Activated CD8-positive, alpha-beta T cell treated with anti-CD3 and anti-CD28 coated beads for 36 hours (primary cell): ENCODE measurements at regions of chr4 and their contacts with region 1.

Region 1: GRCh38 chr4:184263910-184264732 is 46.4 kb upstream of the ENPP6 start:
- DNase-seq: peak; percentile 100
- ATAC-seq: peak; percentile 47
- H3K4me3 Mint-ChIP-seq: peak overlapping the region; percentile 3
- H3K27ac Mint-ChIP-seq: peak overlapping the region; percentile 61
- H3K4me1 Mint-ChIP-seq: peaks cover 51% of the 10 kb centered on the region
- H3K27me3 Mint-ChIP-seq: no peaks in the 10 kb centered on the region
- CTCF ChIP-seq: peak; percentile 90

Region 2: DNA sequence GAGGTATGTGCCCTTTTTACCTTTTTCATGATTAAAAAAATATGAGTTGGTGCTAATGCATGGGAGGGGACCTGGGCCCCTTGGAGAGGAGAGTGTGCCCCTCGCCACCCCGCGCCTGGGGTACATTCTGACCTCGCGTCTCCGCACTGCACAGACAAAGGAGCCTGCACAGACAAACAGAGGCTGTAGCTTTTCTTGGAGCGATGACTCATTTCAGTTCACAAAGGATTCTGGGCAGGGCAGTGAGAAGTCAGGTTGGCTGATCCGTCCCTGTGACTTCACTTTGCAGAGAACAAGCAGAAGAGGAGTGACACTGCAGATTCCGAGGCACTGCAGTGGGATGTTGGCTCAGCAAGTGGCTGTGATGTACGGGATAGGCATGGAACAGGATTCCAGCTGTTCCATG is 276.1 kb before region 1 on chr4:
- CTCF ChIA-PET with region 1: no interaction called
- POLR2A ChIA-PET with region 1: no interaction called
- intact Hi-C with region 1: no loop called
- DNase-seq: no peak
- ATAC-seq: no peak
- H3K4me3 Mint-ChIP-seq: no peak overlapping the region
- H3K27ac Mint-ChIP-seq: no peak overlapping the region
- H3K4me1 Mint-ChIP-seq: no peaks in the 10 kb centered on the region
- H3K27me3 Mint-ChIP-seq: peaks cover 2% of the 10 kb centered on the region
- CTCF ChIP-seq: no peak

Region 3: GRCh38 chr4:184282251-184282713 is 18.2 kb after region 1 on chr4:
- CTCF ChIA-PET with region 1: interaction called, 89 read pairs
- POLR2A ChIA-PET with region 1: interaction called, 48 read pairs
- intact Hi-C with region 1: no loop called
- DNase-seq: peak; percentile 90
- ATAC-seq: peak; percentile 84
- H3K4me3 Mint-ChIP-seq: peak overlapping the region; percentile 52
- H3K27ac Mint-ChIP-seq: peak overlapping the region; percentile 96
- H3K4me1 Mint-ChIP-seq: peaks cover 69% of the 10 kb centered on the region
- H3K27me3 Mint-ChIP-seq: no peaks in the 10 kb centered on the region
- CTCF ChIP-seq: peak; percentile 58

Region 4: GRCh38 chr4:184329659-184330400 is 65.7 kb after region 1 on chr4:
- CTCF ChIA-PET with region 1: interaction called, 33 read pairs
- POLR2A ChIA-PET with region 1: interaction called, 4 read pairs
- intact Hi-C with region 1: no loop called
- DNase-seq: peak; percentile 71
- ATAC-seq: peak; percentile 54
- H3K4me3 Mint-ChIP-seq: no peak overlapping the region
- H3K27ac Mint-ChIP-seq: no peak overlapping the region
- H3K4me1 Mint-ChIP-seq: peaks cover 31% of the 10 kb centered on the region
- H3K27me3 Mint-ChIP-seq: no peaks in the 10 kb centered on the region
- CTCF ChIP-seq: no peak

Region 5: GRCh38 chr4:184408021-184408710 is 144.0 kb after region 1 on chr4:
- CTCF ChIA-PET with region 1: interaction called, 23 read pairs
- POLR2A ChIA-PET with region 1: interaction called, 3 read pairs
- intact Hi-C with region 1: no loop called
- DNase-seq: no peak
- ATAC-seq: peak; percentile 31
- H3K4me3 Mint-ChIP-seq: no peak overlapping the region
- H3K27ac Mint-ChIP-seq: peak overlapping the region; percentile 56
- H3K4me1 Mint-ChIP-seq: peaks cover 61% of the 10 kb centered on the region
- H3K27me3 Mint-ChIP-seq: no peaks in the 10 kb centered on the region
- CTCF ChIP-seq: no peak

Region 6: DNA sequence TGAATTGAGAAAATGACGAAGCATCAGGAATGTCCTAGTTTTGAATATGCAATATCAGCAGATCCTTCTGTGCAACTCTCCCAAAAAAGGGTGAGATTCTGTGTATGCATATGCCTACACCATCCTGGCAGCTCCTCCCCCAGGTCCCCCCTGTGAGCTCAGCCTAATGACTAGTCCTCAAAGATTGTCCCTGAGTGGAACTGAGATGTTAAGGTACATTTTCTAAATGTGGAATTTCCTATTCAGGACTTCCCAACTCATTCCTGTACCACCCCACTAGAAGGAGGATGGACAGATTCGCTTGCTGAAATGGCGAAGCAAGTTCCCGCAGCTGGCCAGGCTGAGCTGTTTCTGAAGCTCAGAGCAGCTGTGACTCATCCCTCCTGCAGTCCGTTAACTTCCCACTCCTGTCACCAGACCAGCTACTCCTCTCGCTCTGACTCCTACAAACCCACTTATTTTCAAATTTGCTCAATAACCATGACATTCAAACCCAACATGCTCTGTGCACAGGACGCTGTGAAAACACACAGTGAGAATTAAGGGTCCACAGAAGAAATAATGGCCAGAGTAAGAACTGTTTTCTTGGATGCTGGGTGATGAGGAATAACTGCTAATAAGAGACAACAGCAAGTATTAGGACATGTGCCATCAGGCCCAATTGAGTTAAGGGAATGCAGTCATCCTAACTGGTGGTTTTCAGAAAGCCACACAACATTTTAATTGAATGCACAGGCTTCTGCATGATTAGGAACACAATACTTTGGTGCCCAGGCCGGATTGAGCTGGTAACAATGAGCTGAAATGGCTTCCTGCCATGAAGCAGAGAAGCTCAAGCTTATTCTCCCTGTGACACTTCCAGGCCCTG is 250.2 kb after region 1 on chr4:
- CTCF ChIA-PET with region 1: interaction called, 15 read pairs
- POLR2A ChIA-PET with region 1: interaction called, 7 read pairs
- intact Hi-C with region 1: no loop called
- DNase-seq: peak; percentile 88
- ATAC-seq: peak; percentile 93
- H3K4me3 Mint-ChIP-seq: peak overlapping the region; percentile 61
- H3K27ac Mint-ChIP-seq: peak overlapping the region; percentile 81
- H3K4me1 Mint-ChIP-seq: peaks cover 37% of the 10 kb centered on the region
- H3K27me3 Mint-ChIP-seq: no peaks in the 10 kb centered on the region
- CTCF ChIP-seq: no peak

Region 7: GRCh38 chr4:184563621-184564020 is 299.5 kb after region 1 on chr4:
- CTCF ChIA-PET with region 1: interaction called, 15 read pairs
- POLR2A ChIA-PET with region 1: no interaction called
- intact Hi-C with region 1: no loop called
- DNase-seq: no peak
- ATAC-seq: no peak
- H3K4me3 Mint-ChIP-seq: no peak overlapping the region
- H3K27ac Mint-ChIP-seq: no peak overlapping the region
- H3K4me1 Mint-ChIP-seq: peaks cover 8% of the 10 kb centered on the region
- H3K27me3 Mint-ChIP-seq: no peaks in the 10 kb centered on the region
- CTCF ChIP-seq: no peak